AG04450 (cell line): ENCODE measurements at regions of chr10 and their contacts with region 1.

Region 1: GRCh38 chr10:4849555-4850242 is 23.7 kb downstream of the AKR1E2 start:
- DNase-seq: peak; percentile 94
- H3K4me3 ChIP-seq: no peak overlapping the region
- H3K27ac ChIP-seq: no peak overlapping the region
- H3K27me3 ChIP-seq: no peaks in the 10 kb centered on the region
- CTCF ChIP-seq: peak; percentile 100

Region 2: GRCh38 chr10:4813023-4813422 is 36.7 kb before region 1 on chr10:
- CTCF ChIA-PET with region 1: interaction called, 47 read pairs
- POLR2A ChIA-PET with region 1: no interaction called
- DNase-seq: peak; percentile 82
- H3K4me3 ChIP-seq: no peak overlapping the region
- H3K27ac ChIP-seq: peak overlapping the region; percentile 70
- H3K27me3 ChIP-seq: no peaks in the 10 kb centered on the region
- CTCF ChIP-seq: no peak

Region 3: GRCh38 chr10:4839401-4839800 is 10.3 kb before region 1 on chr10:
- CTCF ChIA-PET with region 1: interaction called, 24 read pairs
- POLR2A ChIA-PET with region 1: no interaction called
- DNase-seq: no peak
- H3K4me3 ChIP-seq: no peak overlapping the region
- H3K27ac ChIP-seq: no peak overlapping the region
- H3K27me3 ChIP-seq: no peaks in the 10 kb centered on the region
- CTCF ChIP-seq: no peak

Region 4: GRCh38 chr10:4934391-4934987 is 84.8 kb after region 1 on chr10:
- CTCF ChIA-PET with region 1: interaction called, 15 read pairs
- POLR2A ChIA-PET with region 1: no interaction called
- DNase-seq: no peak
- H3K4me3 ChIP-seq: no peak overlapping the region
- H3K27ac ChIP-seq: no peak overlapping the region
- H3K27me3 ChIP-seq: no peaks in the 10 kb centered on the region
- CTCF ChIP-seq: no peak

Region 5: GRCh38 chr10:4990217-4990616 is 140.5 kb after region 1 on chr10:
- CTCF ChIA-PET with region 1: interaction called, 18 read pairs
- POLR2A ChIA-PET with region 1: no interaction called
- DNase-seq: no peak
- H3K4me3 ChIP-seq: no peak overlapping the region
- H3K27ac ChIP-seq: no peak overlapping the region
- H3K27me3 ChIP-seq: no peaks in the 10 kb centered on the region
- CTCF ChIP-seq: no peak

Region 6: DNA sequence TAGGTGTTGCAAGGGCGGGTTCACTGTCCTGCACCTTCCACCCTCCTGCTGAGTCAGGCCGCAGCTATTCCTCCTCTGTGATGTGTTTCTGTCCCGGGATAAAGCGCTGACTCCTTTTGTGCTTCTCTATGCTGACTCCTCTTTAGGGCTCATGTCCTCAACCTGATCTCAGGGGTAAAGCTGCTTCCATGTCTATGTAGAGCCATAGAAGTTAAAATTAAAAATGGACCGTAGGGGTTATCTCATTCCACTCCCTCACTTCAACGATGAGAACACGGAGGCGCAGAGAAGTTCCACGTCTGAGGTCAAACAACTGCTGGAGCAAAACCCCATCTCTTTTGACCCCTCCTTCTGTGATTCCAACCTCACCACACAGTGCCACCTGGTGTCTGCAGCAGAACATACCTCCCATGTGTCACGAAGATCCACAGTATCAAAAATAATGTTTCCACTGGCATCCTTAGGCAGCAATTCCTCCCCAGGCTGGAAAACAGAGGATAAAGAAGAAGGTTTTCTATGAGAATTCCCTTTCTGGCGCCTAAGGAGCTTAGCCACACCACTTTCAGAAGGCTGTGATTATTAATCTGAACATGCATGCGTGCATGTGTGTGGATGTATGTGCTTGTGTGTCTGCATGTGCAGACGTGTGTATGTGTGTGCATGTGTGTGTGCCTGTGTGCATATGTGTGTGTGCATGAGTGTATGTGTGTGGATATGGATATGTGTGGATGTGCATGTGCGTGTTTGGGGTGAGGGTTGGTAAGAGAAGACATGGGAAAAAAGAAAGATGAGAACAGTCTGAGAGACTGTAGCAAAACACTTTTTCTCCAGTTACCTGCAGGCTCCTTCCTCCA is 433.8 kb after region 1 on chr10:
- CTCF ChIA-PET with region 1: interaction called, 84 read pairs
- POLR2A ChIA-PET with region 1: no interaction called
- DNase-seq: peak; percentile 27
- H3K4me3 ChIP-seq: no peak overlapping the region
- H3K27ac ChIP-seq: no peak overlapping the region
- H3K27me3 ChIP-seq: peaks cover 2% of the 10 kb centered on the region
- CTCF ChIP-seq: peak; percentile 63

Region 7: DNA sequence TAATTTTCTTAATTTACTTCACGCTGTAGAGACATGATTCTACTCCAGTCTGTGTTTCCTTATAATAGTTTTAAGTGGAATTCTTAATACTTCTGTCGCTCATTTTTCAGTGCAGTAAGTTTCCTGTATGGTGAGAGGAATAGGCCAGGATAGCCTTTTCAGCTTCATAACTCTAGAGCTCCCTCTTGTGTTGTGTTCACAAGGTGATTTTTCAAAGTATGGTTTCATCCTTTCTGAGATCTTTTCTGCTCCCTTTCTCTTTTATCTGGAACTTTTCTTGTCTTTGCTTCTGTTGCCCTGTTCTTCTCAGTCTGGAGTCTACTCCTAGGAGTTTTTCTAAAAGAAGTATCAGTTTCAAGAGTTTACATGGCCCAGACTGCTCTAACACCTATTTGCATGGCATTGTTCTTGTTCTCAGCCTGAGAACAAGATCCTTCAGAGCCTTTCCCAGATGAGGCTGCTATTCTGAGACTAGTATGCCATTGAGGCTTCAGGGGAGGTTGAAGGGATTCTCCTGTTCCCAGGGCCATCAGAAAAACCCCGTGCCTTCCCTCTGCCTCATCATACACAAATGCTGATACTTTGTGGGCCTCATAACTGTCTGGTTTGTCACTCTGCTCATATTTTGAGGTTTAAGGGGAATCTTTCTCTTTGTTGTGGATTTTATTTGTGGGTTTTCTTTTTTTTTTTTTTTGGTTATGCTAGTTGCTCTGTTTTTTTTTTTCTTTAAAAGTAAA is 584.5 kb after region 1 on chr10:
- CTCF ChIA-PET with region 1: interaction called, 72 read pairs
- POLR2A ChIA-PET with region 1: no interaction called
- DNase-seq: no peak
- H3K4me3 ChIP-seq: no peak overlapping the region
- H3K27ac ChIP-seq: peak overlapping the region; percentile 48
- H3K27me3 ChIP-seq: no peaks in the 10 kb centered on the region
- CTCF ChIP-seq: peak; percentile 77

Region 8: GRCh38 chr10:5645375-5645774 is 795.7 kb after region 1 on chr10:
- CTCF ChIA-PET with region 1: no interaction called
- POLR2A ChIA-PET with region 1: no interaction called
- DNase-seq: no peak
- H3K4me3 ChIP-seq: no peak overlapping the region
- H3K27ac ChIP-seq: no peak overlapping the region
- H3K27me3 ChIP-seq: no peaks in the 10 kb centered on the region
- CTCF ChIP-seq: no peak